IMR-90 (cell line): ENCODE measurements at regions of chr6 and their contacts with region 1.

Region 1: GRCh38 chr6:17994019-17994418 is 6.6 kb upstream of the KIF13A start:
- DNase-seq: peak; percentile 30
- ATAC-seq: no peak; the same call in 1 of the 2 replicates
- H3K4me3 ChIP-seq: no peak overlapping the region
- H3K27ac ChIP-seq: peak overlapping the region; percentile 50
- H3K4me1 ChIP-seq: peaks cover 10% of the 10 kb centered on the region
- H3K27me3 ChIP-seq: no peaks in the 10 kb centered on the region
- CTCF ChIP-seq: no peak
- POLR2A ChIP-seq: no peak
- RAD21 ChIP-seq: no peak

Region 2: GRCh38 chr6:18034798-18035202 is 40.8 kb after region 1 on chr6:
- CTCF ChIA-PET with region 1: no interaction called
- POLR2A ChIA-PET with region 1: no interaction called
- dilution Hi-C with region 1: no loop called
- in situ Hi-C with region 1: no loop called
- intact Hi-C with region 1: loop called (anchors 5 kb)
- DNase-seq: peak; percentile 19
- ATAC-seq: no peak
- H3K4me3 ChIP-seq: no peak overlapping the region
- H3K27ac ChIP-seq: no peak overlapping the region
- H3K4me1 ChIP-seq: peaks cover 1% of the 10 kb centered on the region; the same call in 1 of the 2 replicates
- H3K27me3 ChIP-seq: 0 out of 2 replicates have a peak, but pooled peaks cover 2% of the 10 kb centered on the region
- CTCF ChIP-seq: no peak
- POLR2A ChIP-seq: no peak
- RAD21 ChIP-seq: no peak